K562 (cell line): ENCODE measurements at regions of chr12 and their contacts with region 1.

Region 1: DNA sequence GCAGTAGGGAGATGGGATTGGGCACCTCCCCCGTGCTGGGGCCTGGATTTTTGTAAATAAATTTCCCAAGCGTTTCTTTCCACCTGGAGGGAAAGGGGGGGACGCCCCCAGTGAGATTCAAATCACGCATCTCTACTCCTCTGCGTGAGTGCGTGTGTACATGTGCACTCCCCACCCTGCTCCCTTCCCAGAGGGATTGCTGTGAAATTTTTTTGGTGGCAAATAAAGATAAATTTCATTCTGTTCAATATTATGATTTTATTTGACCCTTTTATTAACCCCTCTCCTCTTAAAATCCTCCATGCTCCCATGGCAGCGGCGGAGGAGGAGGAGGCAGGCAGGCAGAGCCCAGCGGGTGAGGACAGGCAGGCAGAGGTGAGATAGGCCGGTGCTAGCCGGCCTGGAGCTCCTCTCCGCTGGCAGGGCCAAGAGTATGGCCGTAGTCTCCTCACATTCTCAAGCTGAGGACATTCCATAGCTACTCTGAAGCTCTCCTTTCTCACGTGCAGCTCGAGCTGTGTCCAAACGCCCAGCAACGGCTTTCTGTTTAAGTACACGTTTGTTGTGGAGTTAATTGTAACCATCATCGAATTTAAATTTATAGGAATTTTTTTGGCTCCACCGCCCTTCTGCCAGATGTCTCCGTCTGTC is 1.5 kb upstream of the HOTAIR start:
- DNase-seq: no peak
- ATAC-seq: no peak
- H3K4me3 ChIP-seq: no peak overlapping the region
- H3K27ac ChIP-seq: no peak overlapping the region
- H3K4me1 ChIP-seq: peaks cover 2 to 25% of the 10 kb centered on the region in 2 experiments; a peak in 2 of 5 replicates
- H3K27me3 ChIP-seq: peaks cover 43 to 56% of the 10 kb centered on the region in 2 experiments
- CTCF ChIP-seq: no peak
- EP300 ChIP-seq: no peak
- POLR2A ChIP-seq: no peak
- RAD21 ChIP-seq: no peak

Region 2: DNA sequence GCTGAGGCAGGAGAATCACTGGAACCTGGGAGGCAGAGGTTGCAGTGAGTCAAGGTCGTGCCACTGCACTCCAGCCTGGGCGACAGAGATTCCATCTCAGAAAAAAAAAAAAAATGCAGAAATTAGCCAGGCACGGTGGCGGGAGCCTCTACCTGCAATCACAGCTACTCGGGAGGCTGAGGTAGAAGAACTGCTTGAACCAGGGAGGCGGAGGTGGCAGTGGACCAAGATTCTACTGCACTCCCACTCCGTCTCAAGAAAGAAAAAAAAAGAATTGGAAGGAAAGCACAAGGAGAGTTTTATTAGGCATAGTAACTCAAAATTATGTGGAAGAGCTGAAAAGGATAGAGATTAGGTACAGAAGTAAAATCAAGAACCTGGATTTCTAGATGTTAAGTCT is 573.4 kb before region 1 on chr12:
- CTCF ChIA-PET with region 1: no interaction called
- POLR2A ChIA-PET with region 1: no interaction called
- in situ Hi-C with region 1: no loop called
- intact Hi-C with region 1: no loop called
- DNase-seq: no peak
- ATAC-seq: no peak
- H3K4me3 ChIP-seq: no peak overlapping the region
- H3K27ac ChIP-seq: no peak overlapping the region
- H3K4me1 ChIP-seq: peaks cover under 1 to 21% of the 10 kb centered on the region in 2 experiments; a peak in 3 of 5 replicates
- H3K27me3 ChIP-seq: no peaks in the 10 kb centered on the region
- CTCF ChIP-seq: no peak
- EP300 ChIP-seq: no peak
- POLR2A ChIP-seq: no peak
- RAD21 ChIP-seq: no peak

Region 3: GRCh38 chr12:53999559-54000104 is 23.3 kb after region 1 on chr12:
- CTCF ChIA-PET with region 1: no interaction called
- POLR2A ChIA-PET with region 1: interaction called, 11 read pairs
- in situ Hi-C with region 1: no loop called
- intact Hi-C with region 1: no loop called
- DNase-seq: peak; percentile 77 to 91 (median 82)
- ATAC-seq: peak; percentile 23
- H3K4me3 ChIP-seq: peak overlapping the region; percentile 71
- H3K27ac ChIP-seq: peak overlapping the region; percentile 94
- H3K4me1 ChIP-seq: peaks cover 38 to 78% of the 10 kb centered on the region in 2 experiments
- H3K27me3 ChIP-seq: no peaks in the 10 kb centered on the region
- CTCF ChIP-seq: no peak
- EP300 ChIP-seq: no peak
- POLR2A ChIP-seq: no peak
- RAD21 ChIP-seq: no peak

Region 4: GRCh38 chr12:54207484-54208294 is 231.4 kb after region 1 on chr12:
- CTCF ChIA-PET with region 1: no interaction called
- POLR2A ChIA-PET with region 1: no interaction called
- in situ Hi-C with region 1: no loop called
- intact Hi-C with region 1: no loop called
- DNase-seq: peak; percentile 83 to 90 (median 88)
- ATAC-seq: peak; percentile 94
- H3K4me3 ChIP-seq: no peak overlapping the region
- H3K27ac ChIP-seq: no peak overlapping the region
- H3K4me1 ChIP-seq: peaks cover 6 to 13% of the 10 kb centered on the region in 2 experiments
- H3K27me3 ChIP-seq: peaks cover 2 to 14% of the 10 kb centered on the region in 2 experiments; a peak in 2 of 5 replicates
- CTCF ChIP-seq: peak; percentile 93 to 98 (median 94)
- EP300 ChIP-seq: no peak
- POLR2A ChIP-seq: no peak
- RAD21 ChIP-seq: peak; percentile 74 to 94